Activated naive CD4-positive, alpha-beta T cell treated with anti-CD3 and anti-CD28 coated beads, Interleukin-2, amount 10 ng/mL, durations not matched to agents 7 days and 5 days (primary cell): ENCODE measurements at regions of chr2 and their contacts with region 1.

Region 1: DNA sequence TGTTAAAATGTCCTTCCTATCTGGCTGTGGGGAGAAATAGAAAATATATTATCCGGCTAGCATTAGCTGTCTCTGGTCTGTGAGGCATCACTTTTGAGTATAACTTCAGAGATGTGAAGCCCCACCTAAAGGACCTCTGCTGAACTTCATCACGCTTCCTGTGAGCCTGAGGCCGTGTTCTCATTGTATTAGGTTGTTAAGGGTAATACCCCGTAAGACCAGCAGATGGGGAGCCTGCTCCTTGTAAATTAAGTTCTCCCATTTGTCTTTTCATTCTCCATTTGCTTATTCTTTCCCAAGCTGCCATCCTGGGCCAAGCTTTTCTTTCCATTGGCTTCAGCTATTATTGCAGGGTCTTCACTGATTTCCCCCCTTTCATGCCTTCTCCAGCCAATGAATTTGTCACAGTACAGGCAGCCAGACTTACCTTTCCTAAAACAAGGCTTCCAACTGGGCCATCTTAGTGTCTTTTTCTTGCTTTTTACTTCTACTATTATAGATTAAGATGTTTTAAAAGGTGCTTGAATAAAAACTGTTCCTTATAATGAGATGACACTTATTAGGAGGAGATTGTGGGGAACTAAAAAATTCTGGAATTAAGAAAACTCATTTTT is 12.4 kb downstream of the NIF3L1 start:
- DNase-seq: peak; percentile 84
- H3K4me3 Mint-ChIP-seq: no peak overlapping the region
- H3K27ac Mint-ChIP-seq: peak overlapping the region; percentile 75
- H3K4me1 Mint-ChIP-seq: peaks cover 11% of the 10 kb centered on the region
- H3K27me3 Mint-ChIP-seq: no peaks in the 10 kb centered on the region

Region 2: GRCh38 chr2:200888704-200889625 is 12.6 kb before region 1 on chr2 and contains the starts of genes NIF3L1 and PPIL3:
- CTCF ChIA-PET with region 1: interaction called, 14 read pairs
- DNase-seq: peak; percentile 98
- H3K4me3 Mint-ChIP-seq: peak within 1 kb of the TSS; percentile 93
- H3K27ac Mint-ChIP-seq: peak within 1 kb of the TSS; percentile 100
- H3K4me1 Mint-ChIP-seq: peaks cover 60% of the 10 kb centered on the region
- H3K27me3 Mint-ChIP-seq: peaks cover 3% of the 10 kb centered on the region